Posterior vena cava (tissue), 2 donors: ENCODE measurements at regions of chr16 and their contacts with region 1.

Region 1: GRCh38 chr16:2205104-2205966 is at the start of gene MLST8:
- DNase-seq: peak; percentile 95
- total RNA-seq, gene MLST8: 16.6 to 21.4 TPM

Region 2: DNA sequence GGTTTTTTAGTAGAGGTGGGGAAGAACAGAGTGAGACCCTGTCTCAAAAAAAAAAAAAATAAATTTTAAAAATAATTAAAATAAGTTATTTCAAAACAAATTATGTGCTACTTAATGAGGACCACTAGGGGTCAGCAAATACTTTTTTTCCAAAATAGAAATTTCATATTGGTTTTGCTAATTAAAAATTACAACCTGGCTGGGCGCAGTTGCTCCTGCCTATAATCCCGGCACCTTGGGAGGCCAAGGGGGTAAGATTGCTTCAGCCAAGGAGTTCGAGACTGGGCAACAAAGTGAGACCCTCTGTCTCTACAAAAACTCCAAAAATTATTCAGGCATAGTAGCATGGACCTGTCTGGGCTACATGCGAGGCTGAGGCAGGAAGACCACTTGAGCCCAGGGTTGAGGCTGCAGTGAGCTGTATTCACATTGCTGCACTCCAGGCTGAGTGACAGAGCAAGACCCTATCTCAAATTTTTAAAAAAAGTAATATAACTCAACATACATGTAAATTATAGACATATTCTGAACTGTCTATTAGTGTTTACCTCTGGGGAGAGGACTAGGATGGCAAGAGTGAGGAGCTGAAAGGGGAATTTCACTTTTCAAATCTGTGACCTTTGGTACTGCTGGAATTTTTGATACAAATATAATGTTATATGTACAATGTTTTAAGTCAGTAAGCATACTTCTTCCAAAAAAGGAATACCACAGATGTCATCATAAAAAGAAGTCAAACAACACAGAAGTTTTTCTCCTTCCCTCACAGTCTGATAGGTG is 341.5 kb before region 1 on chr16:
- intact Hi-C with region 1: no loop called
- DNase-seq: no peak

Region 3: GRCh38 chr16:2520092-2520783 is 314.9 kb after region 1 on chr16 and contains the start of gene AMDHD2:
- intact Hi-C with region 1: loop called in 1 of 2 experiments (anchors 10 kb)
- DNase-seq: peak; percentile 97
- total RNA-seq, gene AMDHD2: 25.5 to 34.3 TPM